ENCODE measurements at regions of chr11 and their contacts with region 1.

Region 1: GRCh38 chr11:109853156-109853776 is 239.9 kb upstream of the ZC3H12C start:
- DNase-seq: peak in 1 of 4 donors; percentile 41
- ATAC-seq: peak; percentile 60
- H3K4me3 ChIP-seq: no peak overlapping the region
- H3K27ac ChIP-seq: no peak overlapping the region
- H3K4me1 ChIP-seq: no peaks in the 10 kb centered on the region
- H3K27me3 ChIP-seq: no peaks in the 10 kb centered on the region
- CTCF ChIP-seq: peak; percentile 34 to 44

Region 2: GRCh38 chr11:109939166-109939810 is 86.0 kb after region 1 on chr11:
- intact Hi-C with region 1: loop called in 1 of 2 experiments (anchors 5 kb)
- DNase-seq: peak in 1 of 4 donors; percentile 66
- ATAC-seq: peak; percentile 89
- H3K4me3 ChIP-seq: no peak overlapping the region
- H3K27ac ChIP-seq: no peak overlapping the region
- H3K4me1 ChIP-seq: no peaks in the 10 kb centered on the region
- H3K27me3 ChIP-seq: no peaks in the 10 kb centered on the region
- CTCF ChIP-seq: peak; percentile 40 to 44

Region 3: DNA sequence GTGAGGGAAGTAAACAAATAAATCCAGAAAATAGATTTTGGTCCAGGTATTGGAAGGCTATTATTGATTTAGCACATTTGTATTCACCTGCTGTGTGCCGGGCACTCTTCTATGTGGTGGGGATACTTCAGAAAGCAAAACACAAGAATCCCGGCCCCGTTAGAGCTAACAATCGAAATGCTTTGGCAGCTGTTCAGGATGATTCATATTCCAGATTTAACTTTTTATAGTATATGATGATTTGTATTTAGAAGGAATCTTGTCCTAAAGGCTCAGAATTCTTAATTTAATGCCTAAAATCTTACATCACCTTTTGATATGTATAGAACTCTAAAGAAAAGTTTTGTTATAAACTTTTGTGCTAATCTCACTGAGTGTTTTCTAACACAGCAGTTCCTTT is 267.9 kb after region 1 on chr11:
- intact Hi-C with region 1: no loop called
- DNase-seq: no peak
- ATAC-seq: peak; percentile 59
- H3K4me3 ChIP-seq: no peak overlapping the region
- H3K27ac ChIP-seq: no peak overlapping the region
- H3K4me1 ChIP-seq: peaks cover 0 to 10% of the 10 kb centered on the region in 2 donors
- H3K27me3 ChIP-seq: no peaks in the 10 kb centered on the region
- CTCF ChIP-seq: no peak